T-cell (primary cell): ENCODE measurements at regions of chr12 and their contacts with region 1.

Region 1: GRCh38 chr12:48851883-48852733 is at the start of gene DDX23:
- DNase-seq: peak; percentile 76 to 96 (median 90)
- ATAC-seq: peak; percentile 95 to 98 (median 96)
- H3K4me3 ChIP-seq: peak within 1 kb of the TSS; percentile 88 to 100
- H3K4me3 Mint-ChIP-seq: peak within 1 kb of the TSS; percentile 91 to 96 (median 94)
- H3K27ac ChIP-seq: peak within 1 kb of the TSS; percentile 98
- H3K27ac Mint-ChIP-seq: peak within 1 kb of the TSS; percentile 98
- H3K4me1 ChIP-seq: peaks cover 13 to 39% of the 10 kb centered on the region in 2 experiments
- H3K4me1 Mint-ChIP-seq: peaks cover 32 to 45% (median 39%) of the 10 kb centered on the region in 3 donors
- H3K27me3 ChIP-seq: no peaks in the 10 kb centered on the region
- H3K27me3 Mint-ChIP-seq: no peaks in the 10 kb centered on the region
- total RNA-seq, gene DDX23: 86.8 to 158 (median 144) TPM

Region 2: GRCh38 chr12:48865434-48866290 is 13.6 kb after region 1 on chr12 and contains the start of gene RND1:
- CTCF ChIA-PET with region 1: interaction called, 4 to 28 read pairs
- POLR2A ChIA-PET with region 1: interaction called, 3 to 9 read pairs
- DNase-seq: peak; percentile 59 to 94 (median 82)
- ATAC-seq: peak; percentile 92 to 97 (median 96)
- H3K4me3 ChIP-seq: peak within 1 kb of the TSS; percentile 58 to 77
- H3K4me3 Mint-ChIP-seq: peak within 1 kb of the TSS; percentile 87 to 89 (median 88)
- H3K27ac ChIP-seq: peak within 1 kb of the TSS; percentile 20
- H3K27ac Mint-ChIP-seq: peak within 1 kb of the TSS; percentile 84 to 94
- H3K4me1 ChIP-seq: peaks cover 2 to 23% of the 10 kb centered on the region in 2 experiments
- H3K4me1 Mint-ChIP-seq: peaks cover 25 to 26% (median 25%) of the 10 kb centered on the region in 3 donors
- H3K27me3 ChIP-seq: peaks cover 0 to 33% of the 10 kb centered on the region in 2 experiments
- H3K27me3 Mint-ChIP-seq: peaks cover 13 to 30% of the 10 kb centered on the region in 2 donors
- total RNA-seq, gene RND1: 2.6 to 10.5 (median 5.0) TPM

Region 3: GRCh38 chr12:48903982-48904411 is 51.9 kb after region 1 on chr12:
- CTCF ChIA-PET with region 1: interaction called, 6 to 17 read pairs
- POLR2A ChIA-PET with region 1: no interaction called
- DNase-seq: peak; percentile 69 to 91 (median 82)
- ATAC-seq: peak; percentile 95 to 100 (median 98)
- H3K4me3 ChIP-seq: peak overlapping the region; percentile 22 to 48
- H3K4me3 Mint-ChIP-seq: peak overlapping the region; percentile 56 to 70 (median 70)
- H3K27ac ChIP-seq: no peak overlapping the region
- H3K27ac Mint-ChIP-seq: peak overlapping the region in 1 of 2 donors; percentile 23
- H3K4me1 ChIP-seq: peaks cover 0 to 13% of the 10 kb centered on the region in 2 experiments
- H3K4me1 Mint-ChIP-seq: peaks cover 5 to 7% (median 6%) of the 10 kb centered on the region in 3 donors
- H3K27me3 ChIP-seq: peaks cover 0 to 4% of the 10 kb centered on the region in 2 experiments
- H3K27me3 Mint-ChIP-seq: no peaks in the 10 kb centered on the region

Region 4: GRCh38 chr12:48936379-48936979 is 84.4 kb after region 1 on chr12:
- CTCF ChIA-PET with region 1: interaction called, 19 to 37 read pairs
- POLR2A ChIA-PET with region 1: interaction called in 1 of 2 experiments, 8 read pairs
- DNase-seq: peak; percentile 54 to 91 (median 81)
- ATAC-seq: peak; percentile 56 to 75 (median 65)
- H3K4me3 ChIP-seq: no peak overlapping the region
- H3K4me3 Mint-ChIP-seq: no peak overlapping the region
- H3K27ac ChIP-seq: no peak overlapping the region
- H3K27ac Mint-ChIP-seq: peak overlapping the region; percentile 44 to 76
- H3K4me1 ChIP-seq: peaks cover 2 to 45% of the 10 kb centered on the region in 2 experiments
- H3K4me1 Mint-ChIP-seq: peaks cover 29 to 39% (median 35%) of the 10 kb centered on the region in 3 donors
- H3K27me3 ChIP-seq: no peaks in the 10 kb centered on the region
- H3K27me3 Mint-ChIP-seq: no peaks in the 10 kb centered on the region

Region 5: DNA sequence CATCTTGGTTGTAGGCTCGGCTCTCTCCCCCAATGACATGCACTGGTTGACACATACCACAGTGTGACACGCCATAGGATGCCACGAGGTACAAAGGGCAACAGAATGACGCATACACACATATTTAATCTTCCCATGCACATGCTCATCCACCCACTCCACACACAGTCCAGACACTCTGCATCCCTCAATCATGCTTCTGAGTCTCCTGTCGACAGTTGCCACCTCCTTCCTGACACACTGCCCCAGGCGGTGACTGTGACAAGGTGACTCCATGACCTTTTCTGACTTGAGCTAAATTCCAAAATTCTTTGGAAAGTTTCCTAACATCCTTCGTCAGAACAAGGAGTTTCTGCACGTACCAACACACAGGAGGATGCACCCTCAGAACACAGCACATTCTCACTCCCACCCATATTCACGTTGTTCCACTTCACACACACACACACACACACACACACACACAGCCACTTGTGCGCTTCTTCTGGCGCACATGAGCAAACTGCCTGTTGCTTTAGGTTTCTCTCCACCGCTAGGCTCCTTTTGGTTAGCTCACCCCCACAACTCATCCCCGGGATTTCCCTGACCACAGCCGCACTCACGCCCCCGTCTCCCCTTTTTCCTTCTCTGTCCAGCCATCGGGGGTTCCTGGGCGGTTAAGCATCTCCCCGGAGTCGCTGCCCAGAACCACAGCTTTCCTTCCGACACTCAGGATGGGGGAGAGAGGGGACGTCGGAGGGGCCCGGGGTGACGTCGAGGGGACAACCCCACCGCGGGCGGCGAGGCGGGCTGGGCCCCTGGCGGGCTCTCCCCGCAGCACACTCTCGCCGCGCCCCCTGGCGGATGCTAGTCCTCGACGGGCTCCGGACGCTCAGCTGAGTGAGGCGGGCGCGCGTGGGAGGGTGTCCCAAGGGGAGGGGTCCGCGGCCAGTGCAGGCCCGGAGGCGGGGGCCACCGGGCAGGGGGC is 125.5 kb after region 1 on chr12:
- CTCF ChIA-PET with region 1: interaction called, 7 to 55 read pairs
- POLR2A ChIA-PET with region 1: no interaction called
- DNase-seq: peak in 34 of 35 experiments; percentile 60 to 91 (median 79)
- ATAC-seq: peak; percentile 36 to 61 (median 50)
- H3K4me3 ChIP-seq: no peak overlapping the region
- H3K4me3 Mint-ChIP-seq: peak overlapping the region; percentile 34 to 86 (median 41)
- H3K27ac ChIP-seq: no peak overlapping the region
- H3K27ac Mint-ChIP-seq: peak overlapping the region in 1 of 2 donors; percentile 39
- H3K4me1 ChIP-seq: peaks cover 20 to 63% of the 10 kb centered on the region in 2 experiments
- H3K4me1 Mint-ChIP-seq: peaks cover 44 to 54% (median 54%) of the 10 kb centered on the region in 3 donors
- H3K27me3 ChIP-seq: peaks cover 10 to 60% of the 10 kb centered on the region in 2 experiments
- H3K27me3 Mint-ChIP-seq: peaks cover 26 to 33% of the 10 kb centered on the region in 2 donors